ENCODE measurements at regions of chr12 and their contacts with region 1.

Region 1: GRCh38 chr12:6752921-6753771 is at the start of gene MLF2:
- DNase-seq: peak; percentile 99
- ATAC-seq: peak; percentile 96
- total RNA-seq, gene MLF2: 153 TPM

Region 2: DNA sequence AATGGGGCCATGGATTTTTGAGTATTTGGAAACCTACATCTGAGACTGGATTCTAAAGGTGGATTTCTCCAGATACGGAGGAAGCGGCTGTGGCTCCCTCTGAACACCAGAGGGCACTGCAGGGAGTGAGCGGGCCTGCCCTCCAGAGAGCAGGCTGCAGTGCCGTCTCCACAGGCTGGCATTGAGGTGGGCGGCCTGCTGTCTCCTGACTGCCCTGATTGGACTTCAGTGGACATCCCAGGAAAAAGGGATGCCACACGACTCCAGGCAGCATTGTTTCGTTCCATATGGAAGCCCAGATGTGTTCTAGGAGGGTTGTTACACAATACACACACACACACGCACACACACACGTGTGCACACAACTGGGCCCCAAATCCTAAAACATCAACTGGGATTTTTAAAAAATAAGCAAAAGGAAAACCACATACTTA is 787.2 kb before region 1 on chr12:
- intact Hi-C with region 1: no loop called
- DNase-seq: peak; percentile 70
- ATAC-seq: peak; percentile 85

Region 3: GRCh38 chr12:6667627-6668100 is 85.5 kb before region 1 on chr12:
- intact Hi-C with region 1: no loop called
- DNase-seq: no peak
- ATAC-seq: no peak

Region 4: DNA sequence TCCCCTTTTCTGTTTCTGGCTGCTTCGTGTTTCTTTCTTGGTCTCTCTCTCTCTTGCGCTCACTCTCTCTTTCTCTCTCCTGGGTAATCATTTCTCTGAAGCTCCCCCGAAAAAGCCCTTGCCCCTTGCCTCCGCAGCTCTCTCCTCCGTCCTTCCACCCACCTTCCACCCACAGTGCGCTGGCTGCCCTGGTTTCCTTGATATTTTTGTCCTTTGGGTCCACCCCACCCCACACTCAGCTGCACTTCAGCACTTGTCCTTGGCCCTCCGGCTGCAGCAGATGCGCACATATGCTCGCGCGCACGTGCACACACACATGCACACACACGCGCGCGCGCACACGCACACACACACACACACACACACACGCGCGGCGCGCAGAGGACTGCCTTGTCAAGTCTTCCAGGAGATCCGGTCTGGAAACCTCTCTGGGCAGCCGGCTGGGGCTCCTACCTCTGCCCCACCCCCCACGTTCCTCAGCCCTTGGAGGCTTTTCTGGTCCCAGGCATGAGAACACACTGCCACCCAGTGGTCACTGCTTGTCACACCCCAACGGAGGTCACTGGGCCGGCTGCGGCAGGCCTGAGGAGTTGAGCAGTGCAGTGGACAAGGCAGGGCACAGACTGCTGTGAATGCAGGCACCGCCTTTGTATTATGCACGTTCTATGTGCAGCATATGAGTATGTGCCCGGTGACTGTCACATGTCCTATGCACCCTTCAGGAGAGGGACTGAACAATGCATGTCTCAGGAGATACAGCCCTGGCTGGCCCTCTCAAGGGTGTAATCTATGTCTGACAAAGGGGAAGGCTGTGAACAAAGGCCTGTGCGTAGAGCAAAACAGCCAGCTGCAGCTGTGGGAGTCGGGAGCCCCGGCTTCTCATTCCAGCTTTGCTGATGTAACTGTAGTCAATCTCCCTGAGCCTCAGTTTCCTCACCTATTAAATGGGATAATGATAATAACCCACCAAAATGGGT is 25.7 kb after region 1 on chr12:
- intact Hi-C with region 1: loop called (anchors 2 kb)
- DNase-seq: peak; percentile 96
- ATAC-seq: peak; percentile 98

Region 5: DNA sequence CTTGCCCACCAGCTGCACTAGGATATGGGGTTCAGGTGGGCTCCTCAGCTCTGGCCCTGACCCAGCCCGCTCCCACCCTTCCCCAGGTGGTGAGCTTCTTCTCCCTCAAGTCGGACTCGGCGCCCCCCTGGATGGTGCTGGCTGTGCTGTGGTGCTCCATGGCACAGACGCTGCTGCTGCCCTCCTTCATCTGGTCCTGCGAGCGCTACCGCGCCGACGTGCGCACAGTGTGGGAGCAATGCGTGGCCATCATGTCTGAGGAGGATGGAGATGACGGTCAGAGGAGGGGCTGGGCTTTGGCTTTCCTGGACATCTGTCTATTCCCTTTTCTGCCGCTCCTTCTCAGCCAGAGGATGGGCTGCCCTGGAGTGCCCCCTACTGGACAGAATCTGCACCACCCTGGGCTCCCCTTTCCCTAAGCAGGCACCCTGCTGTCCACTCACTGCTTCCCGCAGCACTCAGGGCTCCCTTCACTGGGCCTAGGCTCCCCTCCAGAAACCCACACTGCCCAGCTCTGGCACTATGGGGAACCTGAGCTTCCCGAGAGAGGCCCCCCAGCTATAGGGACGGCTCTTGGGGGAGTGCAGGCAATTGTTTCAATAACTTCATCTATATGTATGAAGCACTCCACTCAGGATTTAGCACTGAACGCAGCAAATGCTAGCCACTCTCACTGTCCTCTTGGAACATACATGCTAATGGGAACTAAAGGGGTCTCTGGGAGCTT is 72.4 kb after region 1 on chr12:
- intact Hi-C with region 1: loop called (anchors 5 kb)
- DNase-seq: peak; percentile 91
- ATAC-seq: peak; percentile 62